ENCODE measurements at regions of chr9 and their contacts with region 1.

Region 1: GRCh38 chr9:121369595-121370265 is at the start of gene STOM:
- DNase-seq: peak; percentile 92 to 93
- ATAC-seq: peak; percentile 69 to 91 (median 76)
- H3K4me3 ChIP-seq: peak within 1 kb of the TSS; percentile 50 to 86 (median 78)
- H3K27ac ChIP-seq: peak within 1 kb of the TSS; percentile 88 to 99 (median 96)
- H3K4me1 ChIP-seq: peaks cover 3 to 87% (median 77%) of the 10 kb centered on the region in 9 donors
- H3K27me3 ChIP-seq: no peaks in the 10 kb centered on the region
- CTCF ChIP-seq: no peak
- total RNA-seq, gene STOM: 104 to 389 (median 181) TPM

Region 2: DNA sequence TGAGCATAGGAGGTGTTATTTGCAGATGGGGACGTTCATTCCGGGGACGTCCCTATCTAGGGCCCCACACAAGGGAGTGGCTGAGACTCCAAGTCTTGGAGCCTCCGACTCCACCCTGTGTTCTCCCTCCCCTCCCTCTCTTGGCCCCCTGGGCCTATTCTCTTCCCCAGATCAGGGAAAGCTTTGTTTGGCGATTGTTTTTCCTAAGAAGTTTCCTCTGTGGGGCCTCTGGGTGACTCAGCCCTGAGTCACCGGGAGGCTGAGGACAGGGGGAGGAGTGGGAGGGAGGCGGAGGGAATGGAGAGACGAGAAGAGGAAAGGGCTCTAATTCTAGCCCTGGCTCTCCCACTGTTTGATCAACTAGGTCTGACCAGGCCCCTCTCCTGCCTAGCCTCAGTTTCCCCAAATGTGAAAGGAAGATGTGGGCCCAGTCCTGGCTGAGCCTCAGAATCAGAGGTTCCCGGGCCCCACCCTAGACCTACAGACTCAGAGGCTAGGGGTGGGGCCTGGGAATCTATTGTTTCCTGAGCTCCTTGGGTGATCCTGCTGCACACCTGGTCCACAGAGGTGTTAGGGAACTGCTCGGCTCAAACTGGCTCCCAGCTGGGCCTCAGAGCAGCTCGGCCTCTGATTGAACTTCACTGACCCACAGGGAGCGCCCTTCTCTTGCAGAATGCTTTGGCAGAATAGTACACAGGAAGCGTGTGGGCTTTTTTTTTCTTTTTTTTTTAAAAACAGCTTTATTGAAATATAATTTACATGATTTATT is 82.6 kb before region 1 on chr9:
- intact Hi-C with region 1: loop called in 4 of 10 experiments (anchors 2 to 5 kb)
- DNase-seq: peak; percentile 76 to 90
- ATAC-seq: peak; percentile 73 to 85 (median 79)
- H3K4me3 ChIP-seq: peak overlapping the region in 9 of 10 donors; percentile 10 to 42 (median 31)
- H3K27ac ChIP-seq: peak overlapping the region; percentile 93 to 100 (median 98)
- H3K4me1 ChIP-seq: peaks cover 63 to 100% (median 91%) of the 10 kb centered on the region in 9 donors
- H3K27me3 ChIP-seq: no peaks in the 10 kb centered on the region
- CTCF ChIP-seq: peak in 8 of 9 donors; percentile 21 to 69 (median 47)

Region 3: DNA sequence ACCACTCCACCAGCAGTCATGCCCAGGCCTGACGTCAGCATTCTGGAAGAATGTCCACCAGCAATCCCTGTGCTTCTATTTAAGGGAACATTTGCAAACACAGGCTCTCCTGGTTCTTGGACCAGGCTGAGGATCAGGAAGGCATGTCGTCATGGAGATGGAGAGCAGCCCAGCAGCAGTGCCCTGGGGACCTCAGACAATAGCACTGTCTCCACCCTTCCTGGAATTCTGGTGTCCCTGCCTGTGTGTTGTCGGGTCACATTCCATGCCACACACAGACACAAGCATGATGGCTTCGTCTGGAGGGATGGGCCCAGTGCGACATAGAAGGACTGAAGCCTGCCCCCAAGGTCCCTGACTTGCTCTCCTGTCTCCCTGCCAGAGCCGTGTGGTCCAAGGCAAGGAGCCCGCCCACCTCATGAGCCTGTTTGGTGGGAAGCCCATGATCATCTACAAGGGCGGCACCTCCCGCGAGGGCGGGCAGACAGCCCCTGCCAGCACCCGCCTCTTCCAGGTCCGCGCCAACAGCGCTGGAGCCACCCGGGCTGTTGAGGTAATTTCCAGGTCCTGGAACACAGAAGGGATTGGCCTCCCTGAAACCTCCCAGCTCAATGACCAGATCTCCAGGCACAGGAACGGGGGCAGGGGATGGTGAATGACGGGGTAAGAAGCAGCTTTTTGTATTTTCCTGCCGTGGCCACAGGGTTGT is 43.4 kb before region 1 on chr9:
- intact Hi-C with region 1: loop called in 8 of 10 experiments (anchors 1 to 10 kb)
- DNase-seq: peak; percentile 86 to 94
- ATAC-seq: peak; percentile 90 to 95 (median 92)
- H3K4me3 ChIP-seq: peak overlapping the region in 3 of 10 donors; percentile 2 to 31 (median 24)
- H3K27ac ChIP-seq: peak overlapping the region; percentile 85 to 98 (median 92)
- H3K4me1 ChIP-seq: peaks cover 32 to 96% (median 53%) of the 10 kb centered on the region in 9 donors
- H3K27me3 ChIP-seq: no peaks in the 10 kb centered on the region
- CTCF ChIP-seq: no peak

Region 4: DNA sequence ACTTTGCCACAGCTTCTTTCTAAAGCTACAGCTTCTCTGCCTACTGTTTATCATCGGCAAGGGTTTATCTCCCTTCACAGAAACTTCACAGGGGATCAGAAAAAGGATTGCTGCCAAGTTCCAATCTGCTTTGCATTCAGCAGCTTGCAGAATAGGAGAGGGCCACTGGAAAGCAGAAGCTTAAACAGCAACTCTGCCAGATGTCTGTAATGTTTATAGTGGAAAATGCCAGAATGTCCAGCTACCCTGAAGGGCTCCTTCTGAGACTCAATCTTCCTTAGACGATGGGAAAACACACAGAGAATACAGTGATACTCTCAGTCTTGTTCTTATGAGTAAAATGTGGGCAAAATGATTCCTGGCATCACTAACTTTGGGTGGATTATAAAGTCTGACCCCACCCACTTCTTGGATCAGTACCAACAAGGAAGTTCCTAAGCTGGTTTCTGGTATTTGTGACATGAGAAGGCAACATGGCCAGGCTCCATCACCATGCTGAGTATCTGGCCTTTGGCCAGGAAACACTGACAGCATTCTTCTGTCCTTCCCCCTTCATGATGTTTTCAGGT is 18.7 kb before region 1 on chr9:
- intact Hi-C with region 1: loop called in 2 of 10 experiments (anchors 2 kb)
- DNase-seq: peak; percentile 51 to 89
- ATAC-seq: peak; percentile 41 to 74 (median 62)
- H3K4me3 ChIP-seq: no peak overlapping the region
- H3K27ac ChIP-seq: peak overlapping the region; percentile 28 to 99 (median 90)
- H3K4me1 ChIP-seq: peaks cover 16 to 100% (median 88%) of the 10 kb centered on the region in 9 donors
- H3K27me3 ChIP-seq: no peaks in the 10 kb centered on the region
- CTCF ChIP-seq: no peak

Region 5: GRCh38 chr9:121399883-121400607 is 30.3 kb after region 1 on chr9:
- intact Hi-C with region 1: no loop called
- DNase-seq: peak in 1 of 2 donors; percentile 19
- ATAC-seq: peak in 5 of 8 donors; percentile 46 to 68 (median 64)
- H3K4me3 ChIP-seq: no peak overlapping the region
- H3K27ac ChIP-seq: no peak overlapping the region
- H3K4me1 ChIP-seq: peaks cover 0 to 6% (median 0%) of the 10 kb centered on the region in 9 donors
- H3K27me3 ChIP-seq: no peaks in the 10 kb centered on the region
- CTCF ChIP-seq: peak; percentile 60 to 80 (median 72)

Measured in heart right ventricle (tissue), 16 donors.